Heart left ventricle (tissue), 16 donors: ENCODE measurements at regions of chr16 and their contacts with region 1.

Region 1: DNA sequence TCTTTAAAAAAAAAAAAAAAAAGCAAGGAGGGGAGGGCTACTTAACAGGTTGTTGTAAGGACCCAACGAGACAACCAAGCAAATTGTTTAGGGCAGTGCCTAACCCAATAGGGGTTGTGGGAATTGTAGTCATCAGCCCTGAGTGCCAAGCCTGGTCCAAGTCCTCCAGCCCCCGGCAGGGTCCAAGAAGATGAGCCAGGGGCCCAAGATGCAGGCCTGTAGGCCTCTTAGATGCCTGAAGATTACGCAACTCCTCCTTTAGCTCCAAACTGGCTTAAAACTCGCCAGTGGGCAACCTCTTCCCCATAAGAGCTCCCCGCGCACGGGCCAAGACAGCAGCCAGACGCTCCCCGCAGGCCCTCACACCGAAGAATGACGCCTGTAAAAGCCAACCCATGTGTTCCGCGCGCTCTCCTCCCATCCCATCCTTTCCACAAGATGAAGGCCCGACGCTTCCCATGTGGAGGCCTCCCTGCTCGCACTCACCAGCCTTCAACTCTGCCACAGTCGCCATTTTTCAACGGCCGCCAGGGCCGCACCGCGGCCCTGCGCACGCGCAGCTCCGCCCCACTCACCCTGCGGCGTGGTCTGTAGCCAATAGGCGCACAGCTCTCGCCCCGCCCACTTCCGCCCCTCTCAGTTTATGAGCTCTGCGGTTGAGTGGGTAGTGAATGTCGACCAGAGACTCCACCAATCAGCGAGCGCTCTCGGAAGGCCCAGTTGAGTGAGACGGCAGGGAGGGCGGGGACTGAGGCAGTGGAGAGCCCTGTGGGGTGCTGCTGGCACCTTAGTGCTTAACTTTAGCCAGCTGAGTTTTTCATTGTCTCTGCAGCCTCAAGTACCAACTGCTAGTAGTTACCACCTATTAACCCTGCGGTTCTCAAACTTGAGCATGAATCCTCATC is at the start of gene CEP20:
- DNase-seq: peak; percentile 100
- ATAC-seq: peak; percentile 100
- H3K4me3 ChIP-seq: peak within 1 kb of the TSS; percentile 55 to 97 (median 79)
- H3K27ac ChIP-seq: peak within 1 kb of the TSS; percentile 36 to 92 (median 85)
- H3K4me1 ChIP-seq: peaks cover 0 to 33% (median 23%) of the 10 kb centered on the region in 12 donors
- H3K27me3 ChIP-seq: no peaks in the 10 kb centered on the region
- CTCF ChIP-seq: peak in 7 of 12 donors; percentile 17 to 41 (median 25)
- POLR2A ChIP-seq: peak; percentile 39 to 80
- total RNA-seq, gene CEP20: 23.0 to 40.3 (median 28.7) TPM

Region 2: DNA sequence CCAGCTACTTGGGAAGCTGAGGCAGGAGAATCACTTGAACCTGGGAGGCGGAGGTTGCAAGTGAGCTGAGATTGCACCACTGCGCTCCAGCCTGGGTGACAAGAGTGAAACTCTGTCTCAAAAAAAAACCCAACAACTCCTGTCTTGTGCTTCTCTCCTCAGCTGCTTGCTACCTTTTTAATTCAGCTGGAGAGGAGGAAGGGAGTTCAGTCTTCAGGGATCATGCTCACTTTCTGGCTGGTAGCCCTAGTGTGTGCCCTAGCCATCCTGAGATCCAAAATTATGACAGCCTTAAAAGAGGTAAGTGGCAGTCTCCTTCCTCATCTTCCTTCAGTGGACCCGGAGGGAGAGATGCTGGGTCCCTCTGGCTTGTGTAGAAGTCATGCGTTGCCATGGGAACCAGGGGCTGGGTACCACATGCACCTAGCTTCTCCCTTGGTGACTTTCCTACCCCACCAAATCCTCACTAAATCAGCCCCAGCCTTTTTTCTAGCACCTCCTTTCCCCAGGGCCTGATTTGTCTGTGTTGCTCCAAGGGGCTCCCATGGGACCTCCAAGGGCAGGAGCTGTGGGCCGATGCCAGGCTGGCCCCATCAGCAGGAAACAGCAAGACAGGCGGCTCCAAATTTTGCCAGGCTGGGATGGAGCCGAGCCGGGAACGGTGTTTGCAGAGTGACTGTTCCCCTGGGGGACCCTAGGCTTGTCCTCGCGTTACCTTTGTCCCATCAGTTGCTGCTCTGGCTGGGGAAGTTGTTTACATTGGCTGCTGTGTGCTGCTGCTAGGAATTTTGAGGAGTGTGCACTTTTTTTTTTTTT is 126.2 kb after region 1 on chr16:
- intact Hi-C with region 1: loop called in 1 of 10 experiments (anchors 5 kb)
- DNase-seq: peak; percentile 67 to 79 (median 71)
- ATAC-seq: peak; percentile 51 to 90 (median 70)
- H3K4me3 ChIP-seq: no peak overlapping the region
- H3K27ac ChIP-seq: peak overlapping the region in 1 of 12 donors; percentile 51
- H3K4me1 ChIP-seq: peaks cover 0 to 22% (median 13%) of the 10 kb centered on the region in 12 donors
- H3K27me3 ChIP-seq: no peaks in the 10 kb centered on the region
- CTCF ChIP-seq: no peak
- POLR2A ChIP-seq: no peak

Region 3: GRCh38 chr16:16021988-16022682 is 133.8 kb after region 1 on chr16:
- intact Hi-C with region 1: loop called in 2 of 10 experiments (anchors 5 to 10 kb)
- DNase-seq: peak; percentile 94 to 98 (median 95)
- ATAC-seq: peak; percentile 97 to 99 (median 98)
- H3K4me3 ChIP-seq: peak overlapping the region in 1 of 12 donors; percentile 14
- H3K27ac ChIP-seq: peak overlapping the region; percentile 62 to 88 (median 81)
- H3K4me1 ChIP-seq: peaks cover 8 to 38% (median 22%) of the 10 kb centered on the region in 12 donors
- H3K27me3 ChIP-seq: no peaks in the 10 kb centered on the region
- CTCF ChIP-seq: no peak
- POLR2A ChIP-seq: no peak

Region 4: DNA sequence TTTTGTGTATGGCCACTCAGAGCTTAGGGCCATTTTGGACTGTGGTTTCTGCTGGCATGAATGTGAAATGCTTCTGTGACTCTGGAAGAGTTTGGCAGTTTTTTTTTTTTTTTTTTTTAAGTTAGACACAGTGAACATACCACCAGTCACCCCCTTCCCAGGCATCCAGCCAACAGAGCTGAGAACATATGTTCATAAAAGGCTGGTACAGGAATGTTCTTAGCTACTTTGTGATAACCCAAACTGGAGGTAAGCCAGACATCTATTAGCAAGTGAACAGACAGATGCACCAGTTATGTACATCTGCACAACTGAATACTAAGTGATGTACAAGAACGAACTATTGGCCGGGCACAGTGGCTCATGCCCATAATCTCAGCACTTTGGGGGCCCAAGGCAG is 153.8 kb after region 1 on chr16:
- intact Hi-C with region 1: loop called in 1 of 10 experiments (anchors 10 kb)
- DNase-seq: peak in 4 of 5 donors; percentile 52 to 70 (median 58)
- ATAC-seq: peak; percentile 80 to 87 (median 82)
- H3K4me3 ChIP-seq: no peak overlapping the region
- H3K27ac ChIP-seq: peak overlapping the region in 5 of 12 donors; percentile 31 to 54 (median 42)
- H3K4me1 ChIP-seq: peaks cover 0 to 19% (median 0%) of the 10 kb centered on the region in 12 donors
- H3K27me3 ChIP-seq: no peaks in the 10 kb centered on the region
- CTCF ChIP-seq: no peak
- POLR2A ChIP-seq: no peak

Region 5: DNA sequence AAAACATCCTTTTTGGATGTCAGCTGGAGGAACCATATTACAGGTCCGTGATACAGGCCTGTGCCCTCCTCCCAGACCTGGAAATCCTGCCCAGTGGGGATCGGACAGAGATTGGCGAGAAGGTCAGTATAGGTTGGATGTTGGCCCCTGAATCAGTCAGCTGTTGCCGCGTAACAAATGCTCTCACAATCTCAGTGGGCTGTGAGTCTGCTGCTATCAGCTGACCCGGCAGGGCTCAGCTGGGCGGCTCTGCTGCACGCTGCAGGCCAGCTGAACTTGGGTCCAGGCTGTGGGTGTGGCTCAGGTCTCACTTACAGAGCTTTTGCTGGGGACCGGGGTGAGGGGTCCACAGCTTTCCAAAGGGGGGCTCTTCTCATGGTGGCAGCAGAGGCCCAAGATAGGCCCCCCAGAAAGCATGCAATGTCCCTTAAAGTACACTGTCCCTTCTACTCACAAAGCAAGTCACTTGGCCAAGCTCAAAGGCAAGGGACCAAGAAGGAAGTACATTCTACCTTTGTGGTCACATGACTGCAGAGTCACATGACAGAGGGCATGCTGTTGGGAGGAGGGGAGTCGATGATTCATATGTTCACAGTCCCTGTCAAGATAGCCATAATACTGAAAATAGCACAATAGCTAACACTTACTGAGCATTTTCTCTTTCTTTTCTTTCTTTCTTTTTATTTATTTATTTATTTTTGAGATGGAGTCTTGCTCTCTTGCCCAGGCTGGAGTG is 195.3 kb after region 1 on chr16:
- intact Hi-C with region 1: loop called in 1 of 10 experiments (anchors 10 kb)
- DNase-seq: no peak
- ATAC-seq: no peak
- H3K4me3 ChIP-seq: no peak overlapping the region
- H3K27ac ChIP-seq: peak overlapping the region in 1 of 12 donors; percentile 33
- H3K4me1 ChIP-seq: peaks cover 0 to 7% (median 0%) of the 10 kb centered on the region in 12 donors
- H3K27me3 ChIP-seq: no peaks in the 10 kb centered on the region
- CTCF ChIP-seq: no peak
- POLR2A ChIP-seq: no peak